IMR-90 (cell line): ENCODE measurements at regions of chr5 and their contacts with region 1.

Region 1: GRCh38 chr5:149442563-149443182 is 63.6 kb upstream of the IL17B start:
- DNase-seq: peak; percentile 70
- ATAC-seq: peak; percentile 82
- H3K4me3 ChIP-seq: no peak overlapping the region
- H3K27ac ChIP-seq: peak overlapping the region; percentile 74
- H3K4me1 ChIP-seq: peaks cover 13% of the 10 kb centered on the region
- H3K27me3 ChIP-seq: no peaks in the 10 kb centered on the region
- CTCF ChIP-seq: peak; percentile 92
- POLR2A ChIP-seq: no peak
- RAD21 ChIP-seq: peak; percentile 96

Region 2: GRCh38 chr5:149063017-149063687 is 379.5 kb before region 1 on chr5 and contains the start of gene SH3TC2:
- CTCF ChIA-PET with region 1: no interaction called
- POLR2A ChIA-PET with region 1: no interaction called
- dilution Hi-C with region 1: no loop called
- in situ Hi-C with region 1: no loop called
- intact Hi-C with region 1: no loop called
- DNase-seq: peak; percentile 61
- ATAC-seq: peak; percentile 95
- H3K4me3 ChIP-seq: no peak within 1 kb of the TSS
- H3K27ac ChIP-seq: peak within 1 kb of the TSS; percentile 77
- H3K4me1 ChIP-seq: peaks cover 24% of the 10 kb centered on the region
- H3K27me3 ChIP-seq: no peaks in the 10 kb centered on the region
- CTCF ChIP-seq: no peak
- POLR2A ChIP-seq: no peak
- RAD21 ChIP-seq: no peak
- total RNA-seq, gene SH3TC2: 7.8 and 7.9 TPM in 2 replicates

Region 3: DNA sequence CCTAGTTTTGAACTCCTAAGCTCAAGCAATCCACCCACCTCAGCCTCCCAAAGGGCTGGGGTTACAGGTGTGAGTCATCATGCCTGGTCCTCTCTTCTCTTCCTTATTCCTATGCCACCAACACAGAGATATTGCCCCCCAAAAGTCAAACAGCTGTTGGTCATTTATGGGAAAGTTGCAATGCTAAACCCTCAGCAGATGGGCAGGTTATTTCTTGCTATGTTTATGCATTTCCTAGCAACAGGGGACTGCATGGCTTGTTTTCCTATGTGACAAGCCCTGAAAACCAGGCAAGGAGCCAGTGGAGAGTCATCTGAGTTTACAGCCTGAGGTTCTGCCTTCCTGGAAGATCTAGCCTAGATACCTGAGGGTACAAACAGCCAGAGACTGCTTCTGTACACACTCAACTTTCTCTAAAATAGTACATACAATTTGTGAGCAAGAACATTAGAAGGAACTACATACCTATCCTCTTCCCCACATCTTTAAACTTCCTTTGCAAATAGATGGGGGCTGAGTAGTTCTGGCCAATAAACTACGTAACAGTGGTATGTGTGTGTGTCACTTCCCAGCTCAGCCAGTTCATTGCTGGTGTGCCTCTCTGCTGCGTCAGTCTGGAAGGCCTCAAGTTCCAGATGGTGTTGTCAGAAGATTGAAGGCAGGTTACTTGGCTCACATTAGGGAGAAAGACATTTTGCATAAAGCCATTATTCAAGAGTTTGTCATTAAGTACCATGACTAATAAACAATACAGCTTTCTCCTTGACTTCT is 43.2 kb after region 1 on chr5:
- CTCF ChIA-PET with region 1: interaction called, 3 read pairs
- POLR2A ChIA-PET with region 1: interaction called, 3 read pairs
- dilution Hi-C with region 1: no loop called
- in situ Hi-C with region 1: loop called (anchors 5 kb)
- intact Hi-C with region 1: loop called (anchors 1 kb)
- DNase-seq: peak; percentile 100
- ATAC-seq: peak; percentile 74
- H3K4me3 ChIP-seq: no peak overlapping the region
- H3K27ac ChIP-seq: peak overlapping the region; percentile 84
- H3K4me1 ChIP-seq: peaks cover 31% of the 10 kb centered on the region
- H3K27me3 ChIP-seq: no peaks in the 10 kb centered on the region
- CTCF ChIP-seq: no peak
- POLR2A ChIP-seq: no peak
- RAD21 ChIP-seq: peak; percentile 8; the same call in 1 of the 2 replicates

Region 4: DNA sequence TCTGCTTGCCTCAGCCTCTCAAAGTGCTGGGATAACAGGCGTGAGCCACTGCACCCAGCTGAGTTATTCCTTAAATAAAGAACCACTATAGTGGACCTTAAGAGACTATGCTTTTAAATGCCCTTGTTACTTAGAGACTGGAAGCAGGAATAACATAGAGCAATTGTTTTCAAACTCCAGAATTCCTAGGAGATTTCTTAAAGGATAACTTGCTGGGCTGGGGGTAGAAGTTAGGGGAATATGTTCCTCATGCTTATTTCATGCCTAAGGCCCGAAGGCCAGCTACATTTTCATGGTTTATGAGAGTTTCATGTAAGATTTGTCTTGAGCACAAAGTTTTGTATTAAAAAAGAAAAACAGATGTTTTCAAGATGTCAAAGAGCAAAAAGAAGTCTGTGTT is 60.3 kb after region 1 on chr5:
- CTCF ChIA-PET with region 1: interaction called, 7 read pairs
- POLR2A ChIA-PET with region 1: interaction called, 15 read pairs
- dilution Hi-C with region 1: no loop called
- in situ Hi-C with region 1: no loop called
- intact Hi-C with region 1: no loop called
- DNase-seq: no peak
- ATAC-seq: no peak
- H3K4me3 ChIP-seq: no peak overlapping the region
- H3K27ac ChIP-seq: peak overlapping the region; percentile 29; the same call in 1 of the 2 replicates
- H3K4me1 ChIP-seq: peaks cover 12% of the 10 kb centered on the region
- H3K27me3 ChIP-seq: no peaks in the 10 kb centered on the region
- CTCF ChIP-seq: no peak
- POLR2A ChIP-seq: no peak
- RAD21 ChIP-seq: no peak

Region 5: GRCh38 chr5:149551200-149552037 is 108.7 kb after region 1 on chr5 and contains the start of gene CSNK1A1:
- CTCF ChIA-PET with region 1: interaction called, 9 read pairs
- POLR2A ChIA-PET with region 1: interaction called, 10 read pairs
- dilution Hi-C with region 1: no loop called
- in situ Hi-C with region 1: no loop called
- intact Hi-C with region 1: loop called (anchors 1 kb)
- DNase-seq: peak; percentile 98
- ATAC-seq: peak; percentile 93
- H3K4me3 ChIP-seq: peak within 1 kb of the TSS; percentile 81
- H3K27ac ChIP-seq: peak within 1 kb of the TSS; percentile 100
- H3K4me1 ChIP-seq: no peaks in the 10 kb centered on the region; the same call in 1 of the 2 replicates
- H3K27me3 ChIP-seq: no peaks in the 10 kb centered on the region
- CTCF ChIP-seq: peak; percentile 77
- POLR2A ChIP-seq: peak; percentile 98
- RAD21 ChIP-seq: peak; percentile 77
- total RNA-seq, gene CSNK1A1: 419 and 573 TPM in 2 replicates

Region 6: DNA sequence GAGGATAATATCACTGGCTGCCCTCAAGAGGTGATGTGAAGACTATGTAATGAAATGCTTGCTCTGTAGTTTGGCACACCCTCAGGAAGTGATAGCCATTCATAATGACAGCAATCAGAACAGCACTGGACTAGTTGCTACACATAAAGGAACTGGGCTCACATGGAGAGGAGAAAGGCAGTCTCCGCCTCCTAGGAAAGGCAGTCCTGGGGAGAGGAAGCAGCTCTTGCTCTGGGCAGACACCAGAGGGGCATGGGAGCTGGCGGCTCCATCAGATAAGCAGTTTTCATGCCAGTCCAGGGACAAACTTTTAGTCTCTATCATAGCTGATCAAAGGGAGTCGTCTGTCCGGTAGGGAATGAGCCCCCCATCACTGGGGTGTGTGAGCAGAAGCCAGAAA is 185.6 kb after region 1 on chr5:
- CTCF ChIA-PET with region 1: no interaction called
- POLR2A ChIA-PET with region 1: interaction called, 11 read pairs
- dilution Hi-C with region 1: no loop called
- in situ Hi-C with region 1: no loop called
- intact Hi-C with region 1: no loop called
- DNase-seq: no peak
- ATAC-seq: no peak
- H3K4me3 ChIP-seq: no peak overlapping the region
- H3K27ac ChIP-seq: no peak overlapping the region
- H3K4me1 ChIP-seq: peaks cover 9% of the 10 kb centered on the region
- H3K27me3 ChIP-seq: peaks cover 5% of the 10 kb centered on the region; the same call in 1 of the 2 replicates
- CTCF ChIP-seq: no peak
- POLR2A ChIP-seq: no peak
- RAD21 ChIP-seq: no peak

Region 7: DNA sequence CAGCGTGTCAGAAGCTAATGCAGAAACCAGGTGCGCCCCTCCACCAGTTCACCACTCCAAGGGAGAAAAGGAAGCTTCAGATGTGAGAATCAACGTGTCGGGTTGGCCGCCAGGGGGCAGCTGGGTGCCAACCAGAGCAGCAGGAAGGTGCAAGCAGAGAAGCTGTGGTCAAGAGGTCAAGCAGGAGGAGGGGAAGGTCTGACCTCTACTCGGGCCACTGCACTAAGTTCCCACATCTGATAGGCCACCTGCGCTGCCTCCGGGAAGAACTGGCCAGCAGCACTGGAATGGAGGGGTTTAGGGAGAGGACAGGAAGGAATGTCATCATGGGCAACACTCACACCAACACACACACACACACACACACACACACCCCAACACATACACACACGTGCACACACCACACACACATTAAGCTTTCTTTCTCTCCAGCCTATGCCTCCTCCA is 1683.5 kb after region 1 on chr5:
- CTCF ChIA-PET with region 1: no interaction called
- POLR2A ChIA-PET with region 1: no interaction called
- dilution Hi-C with region 1: no loop called
- in situ Hi-C with region 1: no loop called
- intact Hi-C with region 1: no loop called
- DNase-seq: peak; percentile 51
- ATAC-seq: peak; percentile 79
- H3K4me3 ChIP-seq: no peak overlapping the region
- H3K27ac ChIP-seq: no peak overlapping the region
- H3K4me1 ChIP-seq: peaks cover 2% of the 10 kb centered on the region; the same call in 1 of the 2 replicates
- H3K27me3 ChIP-seq: no peaks in the 10 kb centered on the region
- CTCF ChIP-seq: peak; percentile 63
- POLR2A ChIP-seq: no peak
- RAD21 ChIP-seq: peak; percentile 63